ENCODE measurements at regions of chr15 and their contacts with region 1.

Region 1: DNA sequence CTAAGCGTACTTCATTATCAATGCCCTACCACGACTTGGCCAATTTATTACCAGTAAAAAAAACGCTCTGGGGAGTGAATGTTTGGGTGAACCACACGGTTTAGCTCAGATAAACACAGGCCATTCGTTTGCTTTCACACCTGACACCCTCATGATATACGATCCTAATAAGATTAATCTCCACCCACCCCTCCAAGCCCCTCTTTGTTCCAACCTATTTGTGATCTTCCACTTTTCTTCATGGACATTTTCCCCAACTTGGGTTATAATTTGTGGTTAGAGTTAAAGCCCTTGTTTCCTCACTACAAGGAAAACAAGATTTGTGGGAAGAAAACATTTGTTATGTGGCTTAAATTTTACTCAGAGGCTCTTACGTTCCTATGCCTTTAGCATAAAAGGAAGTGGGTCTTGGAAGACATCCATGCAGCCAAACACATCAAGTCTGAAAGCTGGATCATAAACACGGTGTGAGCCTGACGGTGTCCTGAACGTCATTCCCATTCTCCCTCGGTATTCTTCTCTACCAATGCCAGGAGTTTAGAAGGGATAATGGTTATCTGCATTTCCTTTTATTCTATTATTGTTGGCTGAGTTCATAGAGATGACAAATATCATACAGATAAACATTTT is 518.9 kb downstream of the NR2F2 start:
- DNase-seq: no peak
- H3K4me3 ChIP-seq: no peak overlapping the region
- H3K27ac ChIP-seq: no peak overlapping the region
- H3K27me3 ChIP-seq: peaks cover 0 to 20% (median 0%) of the 10 kb centered on the region in 45 donors
- CTCF ChIP-seq: no peak

Region 2: DNA sequence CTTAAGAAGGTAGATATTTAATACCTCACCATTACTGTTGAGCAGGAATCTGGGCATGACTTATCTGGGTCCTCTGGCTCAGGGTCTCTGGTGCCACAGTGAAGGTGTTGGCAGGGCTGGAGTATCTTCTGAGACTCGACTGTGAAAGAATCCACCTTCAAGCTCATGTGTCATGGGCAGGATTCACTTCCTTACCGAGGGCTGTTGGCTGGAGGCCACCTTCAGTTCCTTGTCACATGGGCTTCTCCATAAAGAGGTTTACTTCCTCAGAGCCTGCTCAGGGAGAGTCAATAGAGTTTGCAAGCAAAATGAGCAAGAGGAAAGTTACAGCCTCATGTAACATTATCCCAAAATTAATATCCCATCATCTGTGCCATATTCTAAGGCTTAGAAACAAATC is 59.4 kb before region 1 on chr15:
- intact Hi-C with region 1: loop called in 1 of 2 experiments (anchors 10 kb)
- DNase-seq: peak in 1 of 10 donors; percentile 31
- H3K4me3 ChIP-seq: no peak overlapping the region
- H3K27ac ChIP-seq: no peak overlapping the region
- H3K27me3 ChIP-seq: peaks cover 0 to 37% (median 0%) of the 10 kb centered on the region in 45 donors
- CTCF ChIP-seq: no peak

Region 3: DNA sequence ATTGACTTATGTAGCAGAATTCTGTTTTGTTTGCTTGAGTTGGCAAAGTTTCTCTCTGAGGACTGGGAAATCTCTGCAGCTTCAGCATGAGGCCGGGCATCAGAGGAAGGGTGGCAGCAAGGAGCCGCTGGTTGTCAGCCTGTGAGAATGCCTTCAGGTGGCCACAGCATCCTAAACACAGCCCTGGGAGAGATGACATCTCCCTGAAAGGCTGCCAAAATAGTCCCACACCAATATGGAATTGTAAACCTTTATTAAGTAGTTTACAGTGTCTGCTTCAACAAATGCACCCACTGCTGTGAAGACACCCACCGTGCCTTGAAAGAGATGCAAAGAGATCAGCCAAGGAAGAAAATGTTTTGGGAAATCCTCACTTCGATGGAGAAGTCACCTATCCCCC is 501.4 kb after region 1 on chr15:
- intact Hi-C with region 1: no loop called
- DNase-seq: no peak
- H3K4me3 ChIP-seq: no peak overlapping the region
- H3K27ac ChIP-seq: no peak overlapping the region
- H3K27me3 ChIP-seq: peaks cover 0 to 8% (median 0%) of the 10 kb centered on the region in 45 donors
- CTCF ChIP-seq: no peak

Measured in dorsolateral prefrontal cortex (tissue), 120 donors.